Aorta (tissue), 5 donors: ENCODE measurements at regions of chrX and their contacts with region 1.

Region 1: GRCh38 chrX:46796574-46797191 is 37.8 kb upstream of the SLC9A7 start:
- DNase-seq: peak; percentile 82 to 91
- ATAC-seq: peak; percentile 84
- H3K4me3 ChIP-seq: no peak overlapping the region
- H3K27ac ChIP-seq: no peak overlapping the region
- H3K4me1 ChIP-seq: no peaks in the 10 kb centered on the region
- H3K27me3 ChIP-seq: no peaks in the 10 kb centered on the region

Region 2: DNA sequence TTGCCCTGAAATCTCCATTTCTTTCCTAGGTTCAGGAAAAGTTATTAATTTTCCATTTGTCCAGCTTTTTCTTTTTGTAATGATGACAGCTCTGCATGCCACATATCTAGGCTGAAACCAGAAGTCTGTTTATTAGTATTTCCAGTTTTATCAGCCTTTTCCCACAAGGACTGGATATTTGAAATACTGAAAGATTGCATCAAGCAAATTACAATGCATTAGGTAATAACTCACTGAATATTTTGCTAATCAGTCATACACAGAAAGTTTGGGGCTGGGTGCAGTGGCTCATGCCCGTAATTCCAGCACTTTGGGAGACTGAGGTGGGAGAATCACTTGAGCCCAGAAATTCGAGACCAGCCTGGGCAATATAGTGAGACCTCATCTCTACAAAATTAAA is 59.2 kb before region 1 on chrX:
- intact Hi-C with region 1: no loop called
- DNase-seq: no peak
- ATAC-seq: no peak
- H3K4me3 ChIP-seq: no peak overlapping the region
- H3K27ac ChIP-seq: no peak overlapping the region
- H3K4me1 ChIP-seq: no peaks in the 10 kb centered on the region
- H3K27me3 ChIP-seq: no peaks in the 10 kb centered on the region

Region 3: GRCh38 chrX:46758906-46759644 is 37.6 kb before region 1 on chrX and contains the start of gene SLC9A7:
- intact Hi-C with region 1: loop called (anchors 2 kb)
- DNase-seq: peak; percentile 83 to 92
- ATAC-seq: peak; percentile 83
- H3K4me3 ChIP-seq: peak within 1 kb of the TSS; percentile 28 to 46
- H3K27ac ChIP-seq: no peak within 1 kb of the TSS
- H3K4me1 ChIP-seq: no peaks in the 10 kb centered on the region
- H3K27me3 ChIP-seq: no peaks in the 10 kb centered on the region
- total RNA-seq, gene SLC9A7: 2.5 to 3.0 TPM